Ovary (tissue), 10 donors: ENCODE measurements at regions of chr11 and their contacts with region 1.

Region 1: GRCh38 chr11:69488541-69488940 is 7.1 kb downstream of the LINC01488 start:
- DNase-seq: no peak
- H3K4me3 ChIP-seq: no peak overlapping the region
- H3K27ac ChIP-seq: no peak overlapping the region
- H3K4me1 ChIP-seq: no peaks in the 10 kb centered on the region
- H3K27me3 ChIP-seq: no peaks in the 10 kb centered on the region
- CTCF ChIP-seq: no peak
- EP300 ChIP-seq: no peak
- POLR2A ChIP-seq: no peak

Region 2: GRCh38 chr11:69542329-69543168 is 54.0 kb after region 1 on chr11:
- intact Hi-C with region 1: no loop called
- DNase-seq: no peak
- H3K4me3 ChIP-seq: no peak overlapping the region
- H3K27ac ChIP-seq: no peak overlapping the region
- H3K4me1 ChIP-seq: no peaks in the 10 kb centered on the region
- H3K27me3 ChIP-seq: no peaks in the 10 kb centered on the region
- CTCF ChIP-seq: no peak
- EP300 ChIP-seq: no peak
- POLR2A ChIP-seq: no peak

Region 3: GRCh38 chr11:69603111-69603836 is 114.7 kb after region 1 on chr11:
- intact Hi-C with region 1: loop called in 1 of 4 experiments (anchors 1 kb)
- DNase-seq: no peak
- H3K4me3 ChIP-seq: no peak overlapping the region
- H3K27ac ChIP-seq: no peak overlapping the region
- H3K4me1 ChIP-seq: no peaks in the 10 kb centered on the region
- H3K27me3 ChIP-seq: no peaks in the 10 kb centered on the region
- CTCF ChIP-seq: no peak
- EP300 ChIP-seq: no peak
- POLR2A ChIP-seq: no peak